ENCODE measurements at regions of chr1 and their contacts with region 1.

Region 1: GRCh38 chr1:93437976-93438605 is 9.8 kb upstream of the FNBP1L start:
- DNase-seq: no peak
- ATAC-seq: peak; percentile 37; the same call in 1 of the 2 replicates
- H3K4me3 ChIP-seq: no peak overlapping the region
- H3K27ac ChIP-seq: no peak overlapping the region
- H3K4me1 ChIP-seq: peaks cover 22 to 32% of the 10 kb centered on the region in 2 experiments
- H3K27me3 ChIP-seq: no peaks in the 10 kb centered on the region
- CTCF ChIP-seq: peak; percentile 38 to 78 (median 78); a peak in 4 of 6 replicates
- POLR2A ChIP-seq: no peak
- RAD21 ChIP-seq: peak; percentile 90

Region 2: GRCh38 chr1:93528412-93528811 is 90.3 kb after region 1 on chr1:
- CTCF ChIA-PET with region 1: no interaction called
- POLR2A ChIA-PET with region 1: no interaction called
- RAD21 ChIA-PET with region 1: no interaction called
- intact Hi-C with region 1: no loop called
- DNase-seq: no peak
- ATAC-seq: no peak
- H3K4me3 ChIP-seq: no peak overlapping the region
- H3K27ac ChIP-seq: no peak overlapping the region
- H3K4me1 ChIP-seq: no peaks in the 10 kb centered on the region
- H3K27me3 ChIP-seq: no peaks in the 10 kb centered on the region
- CTCF ChIP-seq: no peak
- POLR2A ChIP-seq: no peak
- RAD21 ChIP-seq: no peak

Region 3: DNA sequence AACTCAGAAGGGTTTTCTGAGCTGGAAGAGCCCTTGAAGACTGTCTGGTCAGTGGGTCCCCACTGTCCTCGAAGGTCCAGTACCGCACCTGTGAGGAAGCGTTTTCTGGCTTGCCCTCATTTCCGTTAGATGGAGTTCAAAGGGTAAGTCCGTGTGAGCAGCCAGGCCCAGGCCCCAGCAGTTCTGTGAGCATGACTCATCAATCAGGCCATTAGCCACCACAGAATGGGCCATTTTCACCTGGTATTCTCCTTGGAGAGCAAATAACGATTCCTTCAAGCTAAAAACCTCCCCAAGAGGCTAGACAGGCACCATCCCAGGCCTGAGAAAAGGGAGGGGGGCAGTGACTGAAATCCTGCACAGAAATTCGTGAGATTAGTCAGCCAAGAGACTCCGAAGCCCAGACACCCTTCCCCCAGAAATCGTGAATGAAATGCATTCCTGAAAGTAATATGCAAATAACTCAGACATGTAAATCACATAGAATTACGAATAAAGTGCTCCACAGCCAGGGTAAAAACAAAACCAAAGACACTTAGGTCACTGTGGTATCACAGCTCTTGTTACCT is 177.6 kb after region 1 on chr1:
- CTCF ChIA-PET with region 1: no interaction called
- POLR2A ChIA-PET with region 1: no interaction called
- RAD21 ChIA-PET with region 1: no interaction called
- intact Hi-C with region 1: loop called (anchors 2 kb)
- DNase-seq: no peak
- ATAC-seq: peak; percentile 75
- H3K4me3 ChIP-seq: peak overlapping the region in 1 of 2 experiments; percentile 17; a peak in 1 of 4 replicates
- H3K27ac ChIP-seq: peak overlapping the region; percentile 62
- H3K4me1 ChIP-seq: peaks cover 42 to 64% of the 10 kb centered on the region in 2 experiments
- H3K27me3 ChIP-seq: no peaks in the 10 kb centered on the region
- CTCF ChIP-seq: no peak
- POLR2A ChIP-seq: no peak
- RAD21 ChIP-seq: no peak

Region 4: GRCh38 chr1:93846211-93846991 is 408.3 kb after region 1 on chr1:
- CTCF ChIA-PET with region 1: interaction called, 5 read pairs
- POLR2A ChIA-PET with region 1: no interaction called
- RAD21 ChIA-PET with region 1: interaction called in 1 of 2 experiments, 3 read pairs
- intact Hi-C with region 1: loop called (anchors 2 kb)
- DNase-seq: peak; percentile 53
- ATAC-seq: peak; percentile 67
- H3K4me3 ChIP-seq: peak overlapping the region; percentile 59 to 79
- H3K27ac ChIP-seq: peak overlapping the region; percentile 69
- H3K4me1 ChIP-seq: peaks cover 7 to 33% of the 10 kb centered on the region in 2 experiments; a peak in 3 of 4 replicates
- H3K27me3 ChIP-seq: no peaks in the 10 kb centered on the region
- CTCF ChIP-seq: peak in 1 of 3 experiments; percentile 32; a peak in 2 of 6 replicates
- POLR2A ChIP-seq: peak; percentile 36
- RAD21 ChIP-seq: no peak

Measured in HCT116 (cell line).